Mammary epithelial cell (primary cell): ENCODE measurements at regions of chr12 and their contacts with region 1.

Region 1: DNA sequence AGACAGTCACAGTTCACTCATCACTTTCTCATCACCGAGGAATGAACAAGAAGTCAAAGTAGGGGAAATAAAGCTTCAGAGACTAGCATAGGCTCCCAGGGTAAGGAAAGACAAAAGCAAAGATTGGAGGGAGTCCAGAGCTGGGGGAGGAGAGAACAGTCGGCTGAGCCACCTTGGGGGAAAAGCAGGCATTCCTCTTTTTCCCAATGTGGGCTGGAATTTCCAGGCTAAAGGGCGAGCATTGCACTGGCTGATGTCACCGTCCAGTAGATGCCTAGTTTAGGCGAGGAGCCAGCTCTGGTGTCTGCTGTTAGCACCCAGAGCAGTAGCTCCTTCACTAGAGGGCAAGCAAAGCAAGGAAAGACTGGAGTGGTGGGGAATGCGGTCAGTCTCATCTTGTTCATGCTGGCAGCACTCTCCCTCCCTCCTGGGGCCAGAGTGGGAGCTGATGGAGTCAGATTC is 8.5 kb upstream of the KRT75 start:
- DNase-seq: peak; percentile 98
- H3K4me3 ChIP-seq: no peak overlapping the region
- H3K27ac ChIP-seq: peak overlapping the region; percentile 98
- H3K4me1 ChIP-seq: peaks cover 67% of the 10 kb centered on the region
- H3K27me3 ChIP-seq: no peaks in the 10 kb centered on the region
- CTCF ChIP-seq: peak; percentile 37 to 60

Region 2: DNA sequence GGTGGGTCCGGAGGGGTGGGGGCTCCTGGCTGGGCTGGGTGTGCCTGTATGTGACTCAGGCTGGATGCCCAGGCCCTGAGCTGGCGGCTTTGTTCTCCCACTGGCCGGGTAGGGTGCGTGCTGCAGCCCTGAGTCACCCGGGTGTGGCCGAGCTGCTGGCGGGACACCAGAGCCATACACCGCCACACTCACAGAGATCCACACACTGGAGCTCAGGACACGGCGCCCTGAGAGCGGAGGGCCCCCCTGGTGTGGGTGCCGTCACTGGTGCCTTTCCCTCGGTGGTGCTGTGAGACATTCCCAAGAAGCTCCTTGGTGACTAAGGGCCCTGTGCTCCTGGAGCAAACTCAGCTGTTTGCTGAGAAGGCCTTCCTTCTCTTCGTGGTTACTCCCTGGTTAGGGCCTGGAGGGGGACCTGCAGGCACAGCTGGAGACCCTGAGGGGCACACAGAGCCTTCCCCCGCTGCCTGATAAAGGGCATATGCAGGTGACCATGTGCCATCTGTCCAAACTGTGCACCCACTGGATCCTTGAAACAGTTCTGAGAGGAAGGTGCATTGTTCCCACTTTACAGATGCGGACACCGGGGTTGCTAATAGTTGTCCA is 295.2 kb before region 1 on chr12:
- CTCF ChIA-PET with region 1: no interaction called
- dilution Hi-C with region 1: no loop called
- in situ Hi-C with region 1: no loop called
- intact Hi-C with region 1: loop called (anchors 1 kb)
- DNase-seq: peak; percentile 99
- H3K4me3 ChIP-seq: no peak overlapping the region
- H3K27ac ChIP-seq: peak overlapping the region; percentile 100
- H3K4me1 ChIP-seq: peaks cover 89% of the 10 kb centered on the region
- H3K27me3 ChIP-seq: no peaks in the 10 kb centered on the region
- CTCF ChIP-seq: no peak

Region 3: GRCh38 chr12:52390739-52391617 is 51.7 kb before region 1 on chr12:
- CTCF ChIA-PET with region 1: interaction called, 19 read pairs
- dilution Hi-C with region 1: loop called (anchors 5 kb)
- in situ Hi-C with region 1: loop called in 1 of 2 experiments (anchors 10 kb)
- intact Hi-C with region 1: loop called (anchors 1 kb)
- DNase-seq: no peak
- H3K4me3 ChIP-seq: no peak overlapping the region
- H3K27ac ChIP-seq: peak overlapping the region; percentile 19
- H3K4me1 ChIP-seq: peaks cover 59% of the 10 kb centered on the region
- H3K27me3 ChIP-seq: no peaks in the 10 kb centered on the region
- CTCF ChIP-seq: peak; percentile 89 to 90

Region 4: DNA sequence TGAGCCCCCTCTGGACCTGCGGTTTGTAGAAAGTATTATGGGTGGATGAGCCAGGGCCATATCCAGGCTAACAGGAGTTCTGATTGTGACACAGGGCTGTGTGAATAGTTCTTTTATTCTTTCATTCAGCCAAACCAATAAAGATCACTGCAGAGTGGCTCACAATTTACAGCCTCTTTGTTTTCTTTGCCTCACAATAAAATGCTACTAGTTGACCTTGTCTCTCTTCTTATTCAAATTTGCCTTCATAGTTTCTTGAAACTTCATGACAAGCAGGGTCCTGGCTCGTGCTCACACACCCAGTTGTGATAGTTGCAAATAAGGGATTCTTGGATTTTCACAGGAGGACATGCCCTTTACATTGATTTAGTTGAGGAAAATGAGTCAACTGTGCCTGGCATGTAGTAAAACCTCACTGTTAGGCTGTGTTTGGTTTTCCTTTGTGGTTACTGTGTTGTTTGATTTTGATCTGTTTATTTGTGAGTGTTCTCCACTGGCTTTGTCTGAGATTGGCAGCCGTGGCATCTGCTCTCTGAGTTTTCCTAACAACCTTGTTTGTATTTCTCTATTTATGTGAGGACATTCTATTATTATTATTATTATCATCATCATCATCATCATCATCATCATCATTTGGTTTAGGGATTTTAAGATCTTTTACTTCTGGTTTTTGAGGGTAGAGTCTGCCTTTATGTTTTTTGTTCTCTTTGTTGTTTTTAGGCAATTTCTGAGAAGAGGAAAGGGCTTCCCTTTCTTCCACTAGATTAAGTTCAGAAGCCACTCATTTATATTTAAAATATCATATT is 12.0 kb after region 1 on chr12:
- CTCF ChIA-PET with region 1: no interaction called
- dilution Hi-C with region 1: no loop called
- in situ Hi-C with region 1: no loop called
- intact Hi-C with region 1: loop called (anchors 1 kb)
- DNase-seq: peak; percentile 82
- H3K4me3 ChIP-seq: no peak overlapping the region
- H3K27ac ChIP-seq: peak overlapping the region; percentile 85
- H3K4me1 ChIP-seq: peaks cover 36% of the 10 kb centered on the region
- H3K27me3 ChIP-seq: no peaks in the 10 kb centered on the region
- CTCF ChIP-seq: no peak

Region 5: GRCh38 chr12:52506858-52507715 is 64.5 kb after region 1 on chr12:
- CTCF ChIA-PET with region 1: no interaction called
- dilution Hi-C with region 1: no loop called
- in situ Hi-C with region 1: no loop called
- intact Hi-C with region 1: loop called (anchors 1 kb)
- DNase-seq: peak; percentile 82
- H3K4me3 ChIP-seq: no peak overlapping the region
- H3K27ac ChIP-seq: peak overlapping the region; percentile 40
- H3K4me1 ChIP-seq: peaks cover 21% of the 10 kb centered on the region
- H3K27me3 ChIP-seq: no peaks in the 10 kb centered on the region
- CTCF ChIP-seq: peak; percentile 58 to 72

Region 6: GRCh38 chr12:52598966-52599365 is 156.3 kb after region 1 on chr12:
- CTCF ChIA-PET with region 1: interaction called, 11 read pairs
- dilution Hi-C with region 1: no loop called
- in situ Hi-C with region 1: no loop called
- intact Hi-C with region 1: no loop called
- DNase-seq: no peak
- H3K4me3 ChIP-seq: no peak overlapping the region
- H3K27ac ChIP-seq: no peak overlapping the region
- H3K4me1 ChIP-seq: no peaks in the 10 kb centered on the region
- H3K27me3 ChIP-seq: peaks cover 14% of the 10 kb centered on the region
- CTCF ChIP-seq: no peak

Region 7: DNA sequence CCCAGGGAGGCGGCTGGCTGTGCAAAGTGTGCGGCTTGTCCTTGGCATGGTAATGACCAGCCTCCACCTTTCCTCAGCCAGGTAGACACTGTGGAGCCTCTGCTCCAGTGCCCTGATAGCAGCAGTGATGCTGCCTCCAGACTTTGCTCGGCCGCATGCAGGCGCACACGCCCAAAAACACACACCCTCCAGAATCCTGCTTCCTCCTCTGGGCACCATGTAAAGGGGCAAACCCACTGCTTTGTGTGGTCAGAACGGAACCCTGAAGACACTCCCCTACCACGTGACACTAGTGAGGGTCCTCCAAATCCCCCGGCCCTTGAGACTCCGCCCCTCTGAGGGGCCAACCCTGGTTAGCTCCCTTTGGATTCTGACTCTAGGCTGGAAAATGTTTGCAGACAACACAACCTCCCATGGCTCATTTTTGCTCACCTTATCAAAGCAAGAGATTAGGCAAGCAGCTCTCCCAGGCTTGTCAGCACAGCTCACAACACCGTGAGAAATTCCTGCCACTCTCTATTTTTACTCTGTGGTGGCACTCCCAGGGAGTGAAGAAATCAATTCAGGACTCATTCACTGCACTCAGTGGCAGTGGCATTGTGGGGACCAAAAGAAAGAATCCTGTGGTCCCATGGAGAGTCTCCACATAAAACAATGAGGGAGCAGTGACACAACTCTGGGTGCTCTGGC is 256.2 kb after region 1 on chr12:
- CTCF ChIA-PET with region 1: no interaction called
- dilution Hi-C with region 1: no loop called
- in situ Hi-C with region 1: no loop called
- intact Hi-C with region 1: no loop called
- DNase-seq: peak; percentile 26
- H3K4me3 ChIP-seq: no peak overlapping the region
- H3K27ac ChIP-seq: no peak overlapping the region
- H3K4me1 ChIP-seq: no peaks in the 10 kb centered on the region
- H3K27me3 ChIP-seq: peaks cover 3% of the 10 kb centered on the region
- CTCF ChIP-seq: no peak